ENCODE measurements at regions of chrX and their contacts with region 1.

Region 1: DNA sequence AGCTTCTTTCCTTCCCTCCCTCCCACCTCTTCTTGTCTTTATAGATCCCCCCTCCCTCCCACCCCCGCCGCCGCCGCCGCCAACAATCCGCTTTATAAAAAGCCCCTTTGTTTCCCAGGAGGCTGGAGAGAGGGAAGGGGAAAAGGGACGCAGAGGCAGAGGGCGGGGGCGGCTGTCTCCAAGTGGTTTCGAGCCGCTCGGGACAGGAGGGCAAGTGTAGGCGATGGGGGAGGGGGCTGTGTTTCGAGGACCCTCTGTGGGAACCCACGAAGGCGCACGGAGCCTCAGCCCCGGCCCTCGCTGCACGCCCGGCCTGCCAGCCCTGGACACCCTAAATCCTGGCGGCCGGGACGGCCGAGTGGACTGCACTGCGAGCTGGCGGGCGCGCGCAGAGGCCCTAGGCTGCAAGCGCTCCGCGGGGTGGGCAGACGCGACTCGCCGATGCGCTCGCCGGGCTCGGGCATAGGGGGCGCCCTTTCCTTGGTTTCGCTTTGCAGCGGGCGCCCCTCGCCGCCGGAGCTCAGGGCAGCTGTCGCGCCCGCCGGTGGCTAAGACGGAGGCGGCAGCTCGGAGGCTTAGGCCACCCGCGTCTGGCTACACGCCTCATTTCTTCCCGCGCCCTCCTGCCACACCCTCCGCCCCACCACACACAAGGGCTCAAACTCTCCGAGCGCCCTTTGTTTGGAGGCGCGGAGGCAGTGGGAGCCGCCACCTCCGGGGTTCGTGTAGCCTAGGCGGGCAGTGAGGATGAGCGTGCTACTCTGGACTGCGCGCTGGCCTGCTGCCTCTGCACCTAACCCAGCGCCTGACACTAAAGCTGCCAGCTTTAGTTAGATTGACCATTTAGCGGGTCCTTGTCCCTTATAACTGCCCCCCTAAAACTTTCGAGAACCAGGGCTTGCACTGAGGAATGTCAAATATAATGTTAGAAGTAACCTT is 2.2 kb downstream of the MAMLD1 start:
- DNase-seq: peak; percentile 77
- ATAC-seq: peak; percentile 21
- H3K4me3 Mint-ChIP-seq: peak overlapping the region; percentile 73
- H3K27ac Mint-ChIP-seq: no peak overlapping the region
- H3K4me1 Mint-ChIP-seq: peaks cover 15% of the 10 kb centered on the region
- H3K27me3 Mint-ChIP-seq: peaks cover 81% of the 10 kb centered on the region
- CTCF ChIP-seq: 0 out of 2 replicates have a peak, but pooled peaks have one; percentile 39

Region 2: DNA sequence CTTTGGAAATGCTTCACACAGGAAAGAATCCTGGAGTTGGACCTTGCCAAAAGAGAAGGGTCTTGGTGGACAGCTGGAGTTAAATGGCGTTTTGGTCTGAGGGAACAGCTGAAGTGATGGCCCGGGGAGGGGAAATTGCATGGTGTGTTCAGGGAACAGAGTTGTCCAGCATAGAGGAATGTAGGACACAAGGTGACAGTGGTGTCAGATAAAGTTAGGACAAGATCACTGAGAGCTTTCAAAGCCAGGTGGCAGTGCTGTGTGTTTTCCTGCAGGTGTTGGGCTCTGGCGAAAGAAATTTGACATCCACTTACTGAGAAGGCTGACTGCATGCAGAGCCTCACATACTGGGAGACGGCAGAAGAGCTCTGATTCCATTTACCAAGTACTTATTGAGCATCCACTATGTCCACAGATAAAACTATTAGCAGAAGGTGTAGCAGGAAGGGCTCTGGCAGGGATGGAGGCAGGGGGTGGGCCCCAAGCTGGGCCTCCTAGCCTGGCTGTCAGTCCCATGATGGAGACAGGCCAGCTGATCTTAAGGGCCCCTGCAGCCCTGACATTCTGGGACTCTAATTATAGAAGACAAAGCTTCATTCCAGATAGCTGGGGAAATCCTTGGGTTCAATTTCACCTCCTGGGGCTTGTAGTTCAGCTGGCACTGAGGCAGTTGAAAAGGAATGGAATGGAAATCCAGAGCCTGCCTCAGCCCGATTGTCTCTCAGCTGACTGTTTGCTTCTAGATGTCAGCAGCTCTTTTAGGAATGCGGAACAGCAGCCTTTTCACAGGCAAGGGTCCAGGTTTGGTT is 152.4 kb before region 1 on chrX:
- CTCF ChIA-PET with region 1: interaction called, 12 read pairs
- POLR2A ChIA-PET with region 1: no interaction called
- DNase-seq: no peak
- ATAC-seq: no peak
- H3K4me3 Mint-ChIP-seq: no peak overlapping the region
- H3K27ac Mint-ChIP-seq: no peak overlapping the region
- H3K4me1 Mint-ChIP-seq: peaks cover 11% of the 10 kb centered on the region
- H3K27me3 Mint-ChIP-seq: peaks cover 6% of the 10 kb centered on the region
- CTCF ChIP-seq: no peak

Region 3: GRCh38 chrX:150486011-150486410 is 120.7 kb after region 1 on chrX:
- CTCF ChIA-PET with region 1: interaction called, 26 read pairs
- POLR2A ChIA-PET with region 1: no interaction called
- DNase-seq: peak; percentile 49
- ATAC-seq: peak; percentile 88
- H3K4me3 Mint-ChIP-seq: no peak overlapping the region
- H3K27ac Mint-ChIP-seq: no peak overlapping the region
- H3K4me1 Mint-ChIP-seq: peaks cover 15% of the 10 kb centered on the region
- H3K27me3 Mint-ChIP-seq: peaks cover 2% of the 10 kb centered on the region; the same call in 1 of the 2 replicates
- CTCF ChIP-seq: peak; percentile 24; the same call in 1 of the 2 replicates

Measured in WTC11 (cell line).